Thyroid gland (tissue), 4 donors: ENCODE measurements at regions of chr20 and their contacts with region 1.

Region 1: GRCh38 chr20:9359561-9360308 is 154.7 kb upstream of the LAMP5 start:
- DNase-seq: peak; percentile 50 to 63
- H3K4me3 ChIP-seq: no peak overlapping the region
- H3K27ac ChIP-seq: peak overlapping the region in 2 of 3 donors; percentile 8 to 21
- H3K4me1 ChIP-seq: peaks cover 7 to 33% of the 10 kb centered on the region in 2 donors
- H3K27me3 ChIP-seq: no peaks in the 10 kb centered on the region
- CTCF ChIP-seq: peak in 5 of 6 experiments; percentile 47 to 72 (median 60)
- POLR2A ChIP-seq: no peak

Region 2: GRCh38 chr20:8756410-8756809 is 603.3 kb before region 1 on chr20:
- intact Hi-C with region 1: loop called (anchors 10 kb)
- DNase-seq: peak; percentile 12 to 18
- H3K4me3 ChIP-seq: no peak overlapping the region
- H3K27ac ChIP-seq: no peak overlapping the region
- H3K4me1 ChIP-seq: peaks cover 0 to 5% of the 10 kb centered on the region in 2 donors
- H3K27me3 ChIP-seq: no peaks in the 10 kb centered on the region
- CTCF ChIP-seq: no peak
- POLR2A ChIP-seq: no peak

Region 3: GRCh38 chr20:8782804-8783203 is 576.9 kb before region 1 on chr20:
- intact Hi-C with region 1: loop called (anchors 10 kb)
- DNase-seq: no peak
- H3K4me3 ChIP-seq: no peak overlapping the region
- H3K27ac ChIP-seq: no peak overlapping the region
- H3K4me1 ChIP-seq: no peaks in the 10 kb centered on the region
- H3K27me3 ChIP-seq: no peaks in the 10 kb centered on the region
- CTCF ChIP-seq: no peak
- POLR2A ChIP-seq: no peak

Region 4: GRCh38 chr20:8853805-8854338 is 505.9 kb before region 1 on chr20:
- intact Hi-C with region 1: loop called (anchors 5 kb)
- DNase-seq: peak; percentile 11 to 12
- H3K4me3 ChIP-seq: no peak overlapping the region
- H3K27ac ChIP-seq: peak overlapping the region; percentile 3 to 39 (median 10)
- H3K4me1 ChIP-seq: peaks cover 3 to 18% of the 10 kb centered on the region in 2 donors
- H3K27me3 ChIP-seq: no peaks in the 10 kb centered on the region
- CTCF ChIP-seq: peak; percentile 74 to 95 (median 86)
- POLR2A ChIP-seq: no peak

Region 5: DNA sequence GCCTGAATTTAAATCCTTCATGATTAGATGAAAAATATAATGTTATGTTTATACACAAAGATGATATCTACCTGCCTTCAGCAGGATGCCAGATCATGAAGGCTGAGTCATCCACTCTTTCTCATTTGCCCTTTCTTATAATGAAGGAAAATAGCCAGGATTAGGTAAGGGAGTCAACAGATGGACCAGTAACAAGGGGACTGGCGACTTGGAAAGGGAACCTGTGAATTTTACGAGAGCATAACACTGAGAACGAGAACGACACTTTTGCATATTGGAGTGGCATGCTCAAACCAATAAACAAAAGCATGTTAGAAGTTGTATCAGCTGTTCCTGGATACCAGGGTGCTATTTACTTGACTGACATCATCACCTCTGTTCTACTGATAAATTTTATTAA is 308.6 kb after region 1 on chr20:
- intact Hi-C with region 1: no loop called
- DNase-seq: no peak
- H3K4me3 ChIP-seq: no peak overlapping the region
- H3K27ac ChIP-seq: no peak overlapping the region
- H3K4me1 ChIP-seq: no peaks in the 10 kb centered on the region
- H3K27me3 ChIP-seq: no peaks in the 10 kb centered on the region
- CTCF ChIP-seq: no peak
- POLR2A ChIP-seq: no peak